Calu3 (cell line): ENCODE measurements at regions of chr11 and their contacts with region 1.

Region 1: GRCh38 chr11:12361682-12362081 is 15.7 kb upstream of the PARVA start:
- DNase-seq: peak; percentile 66
- H3K4me3 Mint-ChIP-seq: peak overlapping the region; percentile 25
- H3K27ac Mint-ChIP-seq: peak overlapping the region; percentile 10
- H3K4me1 Mint-ChIP-seq: peaks cover 74% of the 10 kb centered on the region
- H3K27me3 Mint-ChIP-seq: no peaks in the 10 kb centered on the region
- CTCF ChIP-seq: no peak

Region 2: DNA sequence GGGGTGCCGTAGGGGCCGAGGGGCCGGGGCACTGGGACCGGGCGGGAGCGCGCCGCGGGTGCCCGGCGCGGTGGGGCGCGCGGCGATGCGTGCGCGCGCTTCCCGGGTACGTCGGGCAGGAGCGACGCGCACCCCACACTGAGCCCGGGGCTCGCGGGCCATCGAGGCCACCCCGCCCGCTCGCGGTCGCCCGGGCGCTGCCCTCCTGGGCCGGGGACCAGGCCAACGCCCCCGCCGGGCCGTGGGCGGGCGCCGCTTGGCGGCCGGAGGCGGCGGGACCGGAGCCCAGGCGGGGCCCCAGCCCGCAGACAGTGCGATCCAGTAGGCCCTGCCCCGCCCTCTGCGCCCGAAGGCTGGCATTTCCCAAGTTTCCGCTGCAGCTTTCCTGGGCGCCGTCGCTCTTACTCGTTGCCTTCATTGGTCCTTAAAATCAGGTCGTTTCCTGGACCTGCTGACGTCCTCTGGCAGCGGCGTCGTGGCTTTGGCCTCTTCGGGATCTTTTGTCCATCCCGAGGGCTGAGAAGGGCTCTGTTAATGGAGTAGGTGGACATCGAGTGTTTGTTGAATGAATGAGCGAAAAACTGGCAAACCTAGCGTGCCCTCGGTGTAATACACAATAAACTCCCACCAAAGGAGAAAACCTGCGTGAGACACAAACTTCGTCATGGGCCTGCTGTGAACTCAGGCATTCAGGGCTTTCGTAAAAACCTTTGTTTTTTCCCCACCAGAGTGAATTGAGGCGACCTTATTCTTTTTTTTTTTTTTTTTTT is 16.3 kb after region 1 on chr11:
- CTCF ChIA-PET with region 1: interaction called, 11 read pairs
- intact Hi-C with region 1: no loop called
- DNase-seq: peak; percentile 82
- H3K4me3 Mint-ChIP-seq: peak overlapping the region; percentile 89
- H3K27ac Mint-ChIP-seq: peak overlapping the region; percentile 96
- H3K4me1 Mint-ChIP-seq: peaks cover 11% of the 10 kb centered on the region
- H3K27me3 Mint-ChIP-seq: no peaks in the 10 kb centered on the region
- CTCF ChIP-seq: peak; percentile 32